GM13976 (cell line): ENCODE measurements at regions of chr2 and their contacts with region 1.

Region 1: DNA sequence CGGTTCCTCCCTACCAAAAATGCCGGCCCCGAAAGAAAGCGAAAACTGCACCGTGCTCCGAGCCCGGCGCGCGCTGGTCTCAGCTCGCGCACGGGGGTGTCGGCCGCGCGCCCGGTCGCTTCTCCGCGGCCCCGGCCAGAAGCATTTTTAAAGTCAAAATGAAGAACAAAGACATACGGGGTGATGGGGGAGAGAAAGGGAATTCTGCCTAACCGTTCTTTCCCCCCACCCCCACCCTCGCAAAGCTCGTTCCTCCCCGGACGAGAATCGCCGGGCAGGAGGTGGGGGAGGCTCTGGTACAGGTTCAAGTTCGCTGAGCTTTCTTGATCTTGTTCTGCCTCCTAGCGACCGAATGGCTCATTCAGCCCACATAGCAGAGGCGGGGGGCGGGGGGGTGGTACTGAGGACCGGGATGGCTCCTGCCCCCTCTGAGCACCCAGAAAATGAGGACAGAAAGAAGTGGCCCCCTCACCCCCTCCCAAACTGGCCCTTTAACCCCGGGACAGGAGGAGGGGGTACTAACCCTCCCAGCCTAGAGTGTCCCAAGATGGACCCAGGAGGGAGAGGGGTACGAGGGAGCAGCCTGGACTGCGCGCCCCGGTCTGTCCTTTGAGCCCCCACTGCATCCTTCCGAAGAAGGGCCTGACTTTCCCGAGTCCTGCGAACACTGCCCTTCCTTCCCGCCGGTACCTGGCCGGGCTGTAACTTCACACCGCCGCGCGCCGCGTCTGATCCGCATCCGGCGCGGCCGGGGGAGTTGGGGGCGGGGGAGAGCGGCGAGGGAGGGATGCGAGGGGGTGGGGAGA is 3.1 kb downstream of the BCL11A start:
- DNase-seq: peak; percentile 82
- CTCF ChIP-seq: peak; percentile 85

Region 2: GRCh38 chr2:58762176-58762781 is 1788.1 kb before region 1 on chr2:
- in situ Hi-C with region 1: loop called (anchors 25 kb)
- DNase-seq: no peak
- CTCF ChIP-seq: peak; percentile 45

Region 3: GRCh38 chr2:59301466-59302402 is 1248.6 kb before region 1 on chr2:
- in situ Hi-C with region 1: loop called (anchors 25 kb)
- DNase-seq: peak; percentile 3
- CTCF ChIP-seq: peak; percentile 37

Region 4: GRCh38 chr2:60818272-60818671 is 267.9 kb after region 1 on chr2:
- in situ Hi-C with region 1: no loop called
- DNase-seq: no peak
- CTCF ChIP-seq: no peak

Region 5: DNA sequence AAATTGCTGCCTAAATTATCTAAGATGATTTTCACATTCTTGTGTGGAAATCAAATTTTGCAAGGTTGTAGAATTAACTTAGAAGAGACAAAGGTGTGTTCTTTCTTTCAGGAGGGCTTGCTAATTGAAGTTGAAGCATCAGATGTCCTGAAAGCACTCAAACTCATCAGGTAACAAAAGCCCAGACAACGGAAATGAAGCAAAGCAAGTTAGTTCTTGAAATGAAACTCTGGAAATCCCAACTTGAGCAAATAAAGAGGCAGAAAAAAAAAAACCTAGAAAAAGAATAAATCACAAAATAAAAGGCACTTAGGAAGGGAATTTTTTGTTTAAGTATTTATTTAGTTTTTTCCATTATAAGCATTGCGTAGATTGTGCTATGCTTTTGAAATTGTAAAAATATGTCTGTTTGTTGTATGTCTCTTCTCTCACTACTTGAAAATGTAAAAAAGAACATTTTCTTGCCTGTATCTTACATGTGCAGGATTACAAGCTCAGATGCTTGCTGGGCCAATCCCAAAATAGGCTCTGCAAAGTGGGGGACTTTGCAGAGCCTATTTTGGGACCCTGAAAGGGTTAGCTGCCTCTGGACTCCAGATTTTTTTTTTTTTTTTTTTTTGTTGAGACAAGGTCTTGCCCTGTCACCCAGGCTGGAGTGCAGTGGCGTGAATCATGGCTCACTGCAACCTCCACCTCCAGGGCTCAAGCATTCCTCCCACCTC is 1256.8 kb after region 1 on chr2:
- in situ Hi-C with region 1: no loop called
- DNase-seq: peak; percentile 51
- CTCF ChIP-seq: no peak